MCF 10A (cell line): ENCODE measurements at regions of chr12 and their contacts with region 1.

Region 1: DNA sequence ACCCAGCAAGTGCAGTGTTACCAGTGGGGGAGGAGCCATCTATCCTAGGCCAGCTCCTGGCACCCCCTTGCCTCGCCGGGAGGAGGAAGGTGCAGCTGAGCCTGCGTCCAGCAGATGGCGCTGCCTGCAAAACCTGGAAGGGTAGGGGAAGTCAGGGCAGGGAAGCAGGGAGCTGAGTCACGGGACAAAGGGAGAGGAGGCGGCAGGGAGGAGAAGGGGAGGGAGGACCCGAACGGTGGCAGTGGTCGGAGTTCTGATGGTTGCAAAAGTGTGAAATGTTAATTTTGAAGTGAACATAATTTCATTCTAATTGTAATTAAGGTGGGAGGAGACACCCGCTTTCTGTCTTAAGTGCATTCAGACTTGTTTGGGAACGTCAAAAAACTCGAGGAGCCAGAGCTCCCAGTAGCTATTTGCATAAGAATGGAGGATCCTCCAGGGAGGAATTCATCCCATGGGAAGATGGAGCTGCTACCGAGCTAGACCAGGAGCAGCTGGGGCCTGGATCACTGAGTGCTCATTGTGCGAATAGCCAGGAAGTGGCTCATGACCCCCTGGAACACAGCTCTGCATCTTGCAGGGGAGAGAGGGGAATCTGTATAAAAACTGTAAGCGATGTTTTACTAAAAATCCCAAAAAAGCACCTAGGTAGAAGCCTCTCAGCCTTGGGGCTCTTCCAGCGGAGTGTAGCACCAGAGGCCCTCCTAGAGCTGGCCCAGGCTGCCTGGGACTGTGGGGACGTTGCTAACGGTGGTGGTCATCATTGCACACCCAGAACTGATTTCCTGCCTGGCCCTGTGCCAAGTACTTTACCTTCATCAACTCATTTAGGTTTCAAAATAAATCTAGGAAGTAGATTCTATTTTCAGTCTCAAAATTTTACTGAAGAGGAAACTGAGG is 59.5 kb downstream of the EMP1 start:
- DNase-seq: peak; percentile 96
- H3K4me3 Mint-ChIP-seq: peak overlapping the region; percentile 68
- H3K27ac Mint-ChIP-seq: peak overlapping the region; percentile 75
- H3K4me1 Mint-ChIP-seq: peaks cover 6% of the 10 kb centered on the region
- H3K27me3 Mint-ChIP-seq: no peaks in the 10 kb centered on the region
- CTCF ChIP-seq: peak; percentile 89

Region 2: GRCh38 chr12:13233830-13234641 is 22.0 kb before region 1 on chr12:
- CTCF ChIA-PET with region 1: interaction called, 12 read pairs
- POLR2A ChIA-PET with region 1: no interaction called
- intact Hi-C with region 1: no loop called
- DNase-seq: peak; percentile 77
- H3K4me3 Mint-ChIP-seq: no peak overlapping the region
- H3K27ac Mint-ChIP-seq: no peak overlapping the region
- H3K4me1 Mint-ChIP-seq: peaks cover 12% of the 10 kb centered on the region
- H3K27me3 Mint-ChIP-seq: no peaks in the 10 kb centered on the region
- CTCF ChIP-seq: peak; percentile 88

Region 3: DNA sequence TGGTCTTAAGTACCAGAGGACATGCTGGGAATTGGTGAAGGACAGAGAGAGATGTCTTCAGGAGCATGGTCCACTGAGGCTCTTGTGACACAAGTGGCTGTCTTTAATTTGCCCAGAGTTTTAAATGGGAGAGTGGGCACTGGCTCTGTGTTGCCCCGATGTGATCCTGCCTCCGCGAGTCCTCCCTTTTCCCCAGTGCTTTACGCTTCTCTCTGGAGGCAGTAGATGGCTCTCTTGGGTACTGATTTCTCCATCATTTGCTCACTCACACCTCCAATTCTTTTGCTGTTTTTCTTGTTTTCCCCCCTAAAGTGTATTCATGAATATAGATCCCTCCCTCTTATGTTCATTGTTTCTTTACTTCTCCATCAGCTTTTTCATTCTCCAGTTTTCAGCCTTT is 14.8 kb after region 1 on chr12:
- CTCF ChIA-PET with region 1: interaction called, 32 read pairs
- POLR2A ChIA-PET with region 1: no interaction called
- intact Hi-C with region 1: no loop called
- DNase-seq: no peak
- H3K4me3 Mint-ChIP-seq: no peak overlapping the region
- H3K27ac Mint-ChIP-seq: no peak overlapping the region
- H3K4me1 Mint-ChIP-seq: no peaks in the 10 kb centered on the region
- H3K27me3 Mint-ChIP-seq: peaks cover 60% of the 10 kb centered on the region
- CTCF ChIP-seq: no peak

Region 4: GRCh38 chr12:13627536-13627935 is 371.5 kb after region 1 on chr12:
- CTCF ChIA-PET with region 1: no interaction called
- POLR2A ChIA-PET with region 1: no interaction called
- intact Hi-C with region 1: no loop called
- DNase-seq: no peak
- H3K4me3 Mint-ChIP-seq: no peak overlapping the region
- H3K27ac Mint-ChIP-seq: no peak overlapping the region
- H3K4me1 Mint-ChIP-seq: no peaks in the 10 kb centered on the region
- H3K27me3 Mint-ChIP-seq: peaks cover 10% of the 10 kb centered on the region
- CTCF ChIP-seq: no peak

Region 5: GRCh38 chr12:13661005-13661887 is 405.2 kb after region 1 on chr12:
- CTCF ChIA-PET with region 1: interaction called, 24 read pairs
- POLR2A ChIA-PET with region 1: no interaction called
- intact Hi-C with region 1: loop called (anchors 2 kb)
- DNase-seq: peak; percentile 62
- H3K4me3 Mint-ChIP-seq: no peak overlapping the region
- H3K27ac Mint-ChIP-seq: no peak overlapping the region
- H3K4me1 Mint-ChIP-seq: no peaks in the 10 kb centered on the region
- H3K27me3 Mint-ChIP-seq: peaks cover 32% of the 10 kb centered on the region
- CTCF ChIP-seq: peak; percentile 73

Region 6: GRCh38 chr12:14167005-14167628 is 911.1 kb after region 1 on chr12:
- CTCF ChIA-PET with region 1: interaction called, 42 read pairs
- POLR2A ChIA-PET with region 1: no interaction called
- intact Hi-C with region 1: loop called (anchors 2 kb)
- DNase-seq: peak; percentile 68
- H3K4me3 Mint-ChIP-seq: no peak overlapping the region
- H3K27ac Mint-ChIP-seq: no peak overlapping the region
- H3K4me1 Mint-ChIP-seq: no peaks in the 10 kb centered on the region
- H3K27me3 Mint-ChIP-seq: peaks cover 9% of the 10 kb centered on the region
- CTCF ChIP-seq: peak; percentile 95